ENCODE measurements at regions of chr1 and their contacts with region 1.

Region 1: DNA sequence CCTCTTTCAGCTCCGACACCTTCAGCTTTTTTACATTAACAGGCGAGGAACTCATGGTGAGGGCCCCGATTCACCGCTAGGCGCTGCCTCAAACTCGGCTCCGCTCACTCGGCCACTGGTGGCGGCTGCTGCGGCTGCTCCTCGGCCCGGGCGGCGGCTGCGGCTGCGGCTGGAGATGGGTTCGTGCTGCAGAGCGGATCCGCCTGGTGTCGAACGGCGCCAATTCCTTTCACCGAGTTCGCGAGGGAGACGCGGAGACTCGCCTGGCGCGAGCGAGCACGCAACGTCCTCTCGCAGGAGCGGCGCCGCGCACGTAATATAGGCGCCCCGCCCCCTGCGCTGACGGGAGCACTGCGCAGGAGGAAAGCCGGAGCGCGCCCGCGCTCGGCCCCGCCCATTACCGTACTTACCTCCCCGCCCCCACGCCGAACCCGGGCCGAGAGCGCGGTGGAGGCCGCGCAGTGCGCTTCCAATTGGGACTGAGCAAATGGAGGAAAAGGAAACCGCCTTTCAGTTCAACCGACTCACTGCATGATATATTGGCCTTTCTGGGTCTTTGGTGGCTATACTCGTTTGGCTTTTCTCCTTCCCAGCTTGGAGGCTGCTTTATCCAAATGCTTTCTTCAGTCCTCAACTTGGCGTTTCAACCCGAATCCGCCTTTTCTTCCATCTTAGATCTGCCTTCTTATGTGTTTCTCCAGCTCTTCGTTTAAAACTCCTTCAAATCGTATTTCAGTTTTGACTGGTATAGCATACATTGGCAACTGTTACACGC is at the start of gene HNRNPU:
- DNase-seq: peak; percentile 99
- ATAC-seq: peak; percentile 74
- H3K4me3 Mint-ChIP-seq: peak within 1 kb of the TSS; percentile 90
- H3K27ac Mint-ChIP-seq: peak within 1 kb of the TSS; percentile 98
- H3K4me1 Mint-ChIP-seq: peaks cover 38% of the 10 kb centered on the region
- H3K27me3 Mint-ChIP-seq: no peaks in the 10 kb centered on the region
- CTCF ChIP-seq: no peak
- total RNA-seq, gene HNRNPU: 424 and 428 TPM in 2 replicates

Region 2: DNA sequence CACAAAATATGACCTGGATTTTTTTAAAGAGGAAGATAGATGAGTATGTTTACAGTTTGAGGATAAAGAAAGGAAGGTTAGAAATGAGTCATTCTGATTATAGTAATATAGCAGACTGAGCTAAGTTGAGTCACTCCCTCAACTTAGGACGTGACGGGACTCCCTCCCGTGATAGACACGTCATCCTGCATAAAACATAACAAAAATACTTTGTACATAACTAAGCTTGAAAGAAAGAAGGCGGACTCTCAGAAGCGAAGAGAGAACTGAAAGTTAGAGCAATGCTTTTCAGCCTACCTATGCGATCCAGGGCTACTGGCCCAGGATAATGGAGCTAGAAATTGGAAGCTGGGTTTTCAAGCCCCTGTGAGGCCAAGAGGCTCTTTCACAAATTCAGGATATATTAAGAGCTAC is 264.5 kb before region 1 on chr1:
- CTCF ChIA-PET with region 1: no interaction called
- POLR2A ChIA-PET with region 1: interaction called, 4 read pairs
- intact Hi-C with region 1: loop called (anchors 5 kb)
- DNase-seq: no peak
- ATAC-seq: peak; percentile 91
- H3K4me3 Mint-ChIP-seq: no peak overlapping the region
- H3K27ac Mint-ChIP-seq: no peak overlapping the region
- H3K4me1 Mint-ChIP-seq: peaks cover 11% of the 10 kb centered on the region
- H3K27me3 Mint-ChIP-seq: no peaks in the 10 kb centered on the region
- CTCF ChIP-seq: no peak

Region 3: GRCh38 chr1:244801246-244801645 is 63.2 kb before region 1 on chr1:
- CTCF ChIA-PET with region 1: interaction called, 13 read pairs
- POLR2A ChIA-PET with region 1: interaction called, 8 read pairs
- intact Hi-C with region 1: loop called (anchors 1 kb)
- DNase-seq: peak; percentile 36
- ATAC-seq: peak; percentile 96
- H3K4me3 Mint-ChIP-seq: peak overlapping the region; percentile 55
- H3K27ac Mint-ChIP-seq: peak overlapping the region; percentile 59
- H3K4me1 Mint-ChIP-seq: peaks cover 5% of the 10 kb centered on the region
- H3K27me3 Mint-ChIP-seq: peaks cover 8% of the 10 kb centered on the region
- CTCF ChIP-seq: no peak

Region 4: GRCh38 chr1:244843148-244843978 is 21.1 kb before region 1 on chr1:
- CTCF ChIA-PET with region 1: no interaction called
- POLR2A ChIA-PET with region 1: interaction called, 364 read pairs
- intact Hi-C with region 1: no loop called
- DNase-seq: no peak
- ATAC-seq: no peak
- H3K4me3 Mint-ChIP-seq: no peak overlapping the region
- H3K27ac Mint-ChIP-seq: no peak overlapping the region
- H3K4me1 Mint-ChIP-seq: peaks cover 21% of the 10 kb centered on the region
- H3K27me3 Mint-ChIP-seq: no peaks in the 10 kb centered on the region
- CTCF ChIP-seq: no peak

Region 5: DNA sequence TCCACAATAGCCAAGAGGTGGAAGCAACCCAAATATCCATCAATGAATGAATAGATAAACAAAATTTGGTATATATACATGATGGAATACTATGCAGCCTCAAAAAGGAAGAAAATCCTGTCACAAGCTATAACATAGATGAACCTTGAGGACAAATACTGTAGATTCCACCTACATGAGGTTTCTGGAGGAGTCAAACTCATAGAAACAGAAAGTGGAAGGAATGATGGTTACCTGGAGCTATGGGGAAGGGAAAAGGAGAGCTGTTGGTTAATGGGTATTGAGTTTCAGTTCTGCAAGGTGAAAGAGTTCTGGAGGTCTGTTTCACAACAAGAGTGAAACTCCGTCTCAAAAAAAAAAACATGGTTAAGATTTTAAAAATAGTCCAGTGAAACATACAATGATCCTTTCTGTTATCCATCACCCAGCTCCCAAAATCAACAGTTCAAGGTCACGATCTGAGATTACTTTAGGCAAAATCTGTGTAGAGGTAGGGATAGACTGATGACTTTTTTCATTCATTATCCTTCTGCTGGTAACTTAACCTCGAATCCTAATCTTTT is 80.8 kb after region 1 on chr1:
- CTCF ChIA-PET with region 1: interaction called, 3 read pairs
- POLR2A ChIA-PET with region 1: interaction called, 98 read pairs
- intact Hi-C with region 1: loop called (anchors 1 kb)
- DNase-seq: no peak
- ATAC-seq: peak; percentile 29
- H3K4me3 Mint-ChIP-seq: peak overlapping the region; percentile 55
- H3K27ac Mint-ChIP-seq: peak overlapping the region; percentile 82
- H3K4me1 Mint-ChIP-seq: peaks cover 35% of the 10 kb centered on the region
- H3K27me3 Mint-ChIP-seq: no peaks in the 10 kb centered on the region
- CTCF ChIP-seq: no peak

Region 6: DNA sequence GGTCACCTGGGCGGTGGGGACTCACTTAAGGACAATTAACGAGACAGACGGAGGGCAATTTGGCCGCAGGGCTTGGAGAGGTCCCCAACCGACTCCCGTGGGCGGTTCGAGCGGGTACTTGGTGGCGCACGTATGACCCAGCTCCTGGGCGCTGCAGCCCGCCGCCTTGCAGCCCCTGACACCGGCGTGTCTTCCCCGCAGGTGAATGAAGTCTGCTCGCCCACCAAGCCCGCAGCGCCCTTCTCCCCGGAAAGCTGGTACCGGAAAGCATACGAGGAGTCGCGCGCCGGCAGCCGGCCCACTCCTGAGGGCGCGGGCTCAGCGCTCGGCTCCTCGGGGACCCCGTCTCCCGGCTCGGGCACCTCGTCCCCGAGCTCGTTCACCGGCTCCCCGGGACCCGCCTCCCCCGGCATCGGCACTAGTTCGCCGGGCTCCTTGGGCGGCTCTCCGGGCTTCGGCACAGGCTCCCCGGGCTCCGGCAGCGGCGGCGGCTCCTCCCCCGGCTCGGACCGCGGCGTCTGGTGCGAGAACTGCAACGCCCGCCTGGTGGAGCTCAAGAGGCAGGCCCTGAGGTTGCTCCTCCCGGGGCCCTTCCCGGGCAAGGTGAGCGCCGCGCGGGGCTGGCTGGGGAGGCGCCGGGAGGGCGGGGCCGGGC is 291.8 kb after region 1 on chr1:
- CTCF ChIA-PET with region 1: no interaction called
- POLR2A ChIA-PET with region 1: no interaction called
- intact Hi-C with region 1: loop called (anchors 10 kb)
- DNase-seq: peak; percentile 72
- ATAC-seq: peak; percentile 93
- H3K4me3 Mint-ChIP-seq: peak overlapping the region; percentile 79
- H3K27ac Mint-ChIP-seq: no peak overlapping the region
- H3K4me1 Mint-ChIP-seq: peaks cover 28% of the 10 kb centered on the region
- H3K27me3 Mint-ChIP-seq: peaks cover 36% of the 10 kb centered on the region
- CTCF ChIP-seq: no peak

Region 7: GRCh38 chr1:246151796-246152434 is 1287.5 kb after region 1 on chr1:
- CTCF ChIA-PET with region 1: no interaction called
- POLR2A ChIA-PET with region 1: no interaction called
- intact Hi-C with region 1: no loop called
- DNase-seq: no peak
- ATAC-seq: no peak
- H3K4me3 Mint-ChIP-seq: no peak overlapping the region
- H3K27ac Mint-ChIP-seq: no peak overlapping the region
- H3K4me1 Mint-ChIP-seq: no peaks in the 10 kb centered on the region
- H3K27me3 Mint-ChIP-seq: no peaks in the 10 kb centered on the region
- CTCF ChIP-seq: no peak